PC-9 (cell line): ENCODE measurements at regions of chr14 and their contacts with region 1.

Region 1: GRCh38 chr14:80901260-80901659 is 40.3 kb downstream of the CEP128 start:
- DNase-seq: no peak
- H3K4me3 ChIP-seq: no peak overlapping the region
- H3K27ac ChIP-seq: no peak overlapping the region
- H3K4me1 ChIP-seq: no peaks in the 10 kb centered on the region
- H3K27me3 ChIP-seq: no peaks in the 10 kb centered on the region
- CTCF ChIP-seq: no peak

Region 2: DNA sequence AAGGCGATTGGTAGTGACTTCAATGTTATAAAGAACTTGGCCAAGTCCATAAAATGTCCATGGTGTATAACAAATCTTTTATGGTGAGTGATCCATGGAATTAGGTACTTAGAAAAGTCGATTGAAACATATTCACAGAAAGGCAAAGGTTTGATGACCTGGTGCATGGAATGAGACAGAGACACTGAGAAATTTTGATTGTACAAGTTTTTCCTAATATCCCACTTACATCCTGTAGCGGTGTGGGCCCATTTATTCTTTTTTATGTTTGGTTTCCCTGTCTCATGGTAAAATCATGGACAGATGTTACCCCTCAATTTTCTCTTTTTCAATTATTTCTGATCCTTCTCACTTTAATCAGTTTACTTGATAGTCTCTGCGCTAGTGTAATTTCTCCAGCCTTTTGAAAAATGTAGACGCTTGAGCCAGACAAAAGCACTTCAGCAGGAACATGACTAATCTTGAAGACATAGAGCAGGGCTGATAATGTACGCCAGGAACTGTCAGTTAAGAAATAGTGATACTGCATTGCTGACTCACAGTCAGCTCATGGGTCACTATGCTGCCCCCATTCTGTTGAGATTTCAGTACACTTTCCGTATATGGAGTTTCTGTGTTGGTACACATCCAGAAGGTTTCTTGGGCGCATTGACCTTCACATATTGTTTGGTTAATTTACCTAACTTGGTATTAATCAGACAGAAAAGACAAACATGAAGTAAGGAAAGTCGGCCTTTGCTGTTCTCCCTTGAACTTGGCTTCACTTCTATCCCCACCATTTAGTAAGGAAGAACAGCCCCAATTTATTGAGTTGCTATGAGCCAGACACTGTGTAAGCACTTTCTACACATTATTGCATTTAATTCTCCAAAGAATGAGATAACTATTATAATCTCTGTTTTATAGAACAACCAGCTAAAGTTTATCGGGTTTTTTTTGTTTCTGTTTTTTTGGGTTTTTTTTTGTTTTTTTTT is 1531.6 kb before region 1 on chr14:
- CTCF ChIA-PET with region 1: no interaction called
- POLR2A ChIA-PET with region 1: interaction called, 28 read pairs
- intact Hi-C with region 1: no loop called
- DNase-seq: no peak
- H3K4me3 ChIP-seq: no peak overlapping the region
- H3K27ac ChIP-seq: no peak overlapping the region
- H3K4me1 ChIP-seq: no peaks in the 10 kb centered on the region
- H3K27me3 ChIP-seq: no peaks in the 10 kb centered on the region
- CTCF ChIP-seq: no peak

Region 3: GRCh38 chr14:81005540-81006228 is 104.4 kb after region 1 on chr14:
- CTCF ChIA-PET with region 1: no interaction called
- POLR2A ChIA-PET with region 1: no interaction called
- intact Hi-C with region 1: no loop called
- DNase-seq: no peak
- H3K4me3 ChIP-seq: no peak overlapping the region
- H3K27ac ChIP-seq: no peak overlapping the region
- H3K4me1 ChIP-seq: no peaks in the 10 kb centered on the region
- H3K27me3 ChIP-seq: peaks cover 9% of the 10 kb centered on the region; the same call in 1 of the 2 replicates
- CTCF ChIP-seq: no peak